ENCODE measurements at regions of chr6 and their contacts with region 1.

Region 1: DNA sequence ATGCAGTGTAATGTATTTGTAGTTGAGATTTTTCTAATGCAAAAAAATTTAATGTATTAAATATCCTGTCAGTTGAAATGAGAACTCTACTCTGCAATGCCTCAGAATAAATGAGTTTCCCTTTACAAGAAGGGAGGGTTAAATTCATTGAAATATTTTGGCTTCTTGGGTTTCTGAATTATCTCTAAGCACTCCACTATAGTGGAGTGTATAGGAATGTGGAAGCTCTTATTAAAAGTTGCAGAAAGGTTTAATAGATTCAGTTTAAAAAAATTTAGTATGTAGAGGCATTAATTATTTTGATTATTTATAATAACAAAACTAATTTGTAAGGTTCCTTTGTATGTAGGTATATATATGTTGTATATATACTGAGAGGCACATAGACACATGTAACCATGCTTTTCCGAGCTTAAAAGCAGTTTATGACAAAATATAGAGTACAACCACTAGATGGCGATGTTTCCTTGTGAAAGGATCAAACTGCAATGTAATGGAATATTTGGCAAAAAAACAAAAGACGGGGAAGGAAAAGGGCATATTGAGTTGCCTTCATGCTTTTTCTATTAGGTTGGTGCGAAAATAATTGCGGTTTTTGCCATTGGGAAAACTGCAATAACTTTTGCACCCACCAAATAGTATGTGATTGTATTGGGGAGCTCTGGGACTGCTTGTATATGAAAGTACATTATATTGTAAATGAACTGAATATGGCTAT is 144.2 kb downstream of the MYO6 start:
- DNase-seq: no peak
- ATAC-seq: no peak
- H3K4me3 Mint-ChIP-seq: no peak overlapping the region
- H3K27ac Mint-ChIP-seq: no peak overlapping the region
- H3K4me1 Mint-ChIP-seq: no peaks in the 10 kb centered on the region
- H3K27me3 Mint-ChIP-seq: no peaks in the 10 kb centered on the region

Region 2: GRCh38 chr6:75874224-75874623 is 19.0 kb before region 1 on chr6:
- CTCF ChIA-PET with region 1: interaction called, 16 read pairs
- DNase-seq: no peak
- ATAC-seq: no peak
- H3K4me3 Mint-ChIP-seq: no peak overlapping the region
- H3K27ac Mint-ChIP-seq: no peak overlapping the region
- H3K4me1 Mint-ChIP-seq: no peaks in the 10 kb centered on the region
- H3K27me3 Mint-ChIP-seq: no peaks in the 10 kb centered on the region

Region 3: GRCh38 chr6:75882734-75883133 is 10.5 kb before region 1 on chr6:
- CTCF ChIA-PET with region 1: interaction called, 13 read pairs
- DNase-seq: no peak
- ATAC-seq: no peak
- H3K4me3 Mint-ChIP-seq: no peak overlapping the region
- H3K27ac Mint-ChIP-seq: no peak overlapping the region
- H3K4me1 Mint-ChIP-seq: no peaks in the 10 kb centered on the region
- H3K27me3 Mint-ChIP-seq: no peaks in the 10 kb centered on the region

Region 4: DNA sequence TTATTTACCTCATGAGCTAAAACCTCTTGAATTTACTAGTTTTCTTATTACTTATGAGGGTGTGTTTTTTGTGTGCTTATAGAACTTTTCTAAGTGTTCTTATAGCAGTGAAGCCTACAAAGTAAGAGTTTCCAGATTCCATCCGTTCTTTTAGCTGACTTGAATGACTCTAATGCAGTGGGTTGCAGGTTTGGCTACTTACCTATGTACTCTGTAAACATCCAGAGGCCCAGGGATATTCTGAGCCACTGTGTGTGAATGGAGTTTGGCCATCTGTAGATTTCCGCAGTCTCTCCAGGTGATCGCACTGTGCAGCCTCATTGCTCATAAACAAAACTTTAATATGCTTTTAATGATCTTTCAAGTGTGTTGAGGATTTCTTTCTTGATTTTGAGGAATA is 13.7 kb after region 1 on chr6:
- CTCF ChIA-PET with region 1: interaction called, 22 read pairs
- DNase-seq: no peak
- ATAC-seq: no peak
- H3K4me3 Mint-ChIP-seq: no peak overlapping the region
- H3K27ac Mint-ChIP-seq: no peak overlapping the region
- H3K4me1 Mint-ChIP-seq: no peaks in the 10 kb centered on the region
- H3K27me3 Mint-ChIP-seq: no peaks in the 10 kb centered on the region

Measured in activated CD8-positive, alpha-beta memory T cell treated with anti-CD3 and anti-CD28 coated beads, Interleukin-2, amount 10 ng/mL, durations not matched to agents 7 days and 5 days (primary cell).